ENCODE measurements at regions of chr20 and their contacts with region 1.

Region 1: DNA sequence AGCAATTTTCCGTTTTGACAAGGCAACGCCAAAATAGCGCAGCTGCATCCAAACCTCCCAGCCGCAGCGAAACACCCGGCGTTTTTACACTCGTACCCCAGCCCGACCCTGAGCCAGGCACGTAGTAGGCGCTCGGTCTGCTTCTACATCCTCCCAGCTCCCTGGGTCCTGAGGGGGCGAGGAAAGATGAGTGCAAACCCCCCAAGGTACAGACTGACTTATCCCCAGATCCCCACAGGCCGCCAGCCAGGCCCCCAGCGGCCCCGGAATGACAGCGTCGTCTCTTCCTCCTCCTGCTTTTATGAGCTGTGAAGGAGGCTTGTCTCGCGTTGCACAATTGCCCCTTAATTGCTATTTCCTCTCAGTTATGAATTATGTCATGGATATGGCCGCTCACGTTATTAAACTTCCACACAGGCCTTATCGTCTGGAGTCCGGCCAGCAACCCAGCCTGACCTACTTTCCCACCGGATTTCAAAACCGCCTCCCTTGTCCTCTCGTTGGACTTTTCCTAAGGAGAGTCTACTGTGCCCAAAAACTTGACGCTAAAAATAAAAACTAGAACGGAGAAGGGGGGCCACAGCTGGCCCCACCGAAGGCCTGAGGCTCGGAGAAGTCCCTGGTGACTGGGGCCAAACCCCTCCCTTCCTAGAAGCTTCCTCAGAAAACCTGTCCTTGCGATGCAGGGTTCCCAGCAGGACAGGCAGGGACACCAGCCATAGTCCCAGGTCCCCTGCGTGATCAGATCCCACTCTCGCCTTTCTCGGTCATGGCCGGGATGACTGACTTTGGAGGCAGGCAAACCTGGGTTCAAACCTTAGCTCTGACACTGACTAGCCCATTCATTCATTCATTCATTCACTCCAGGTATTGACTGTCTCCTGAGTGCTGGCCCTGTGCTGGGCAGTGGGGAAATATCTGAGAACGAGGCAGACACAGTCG is 130.9 kb upstream of the PTPN1 start:
- DNase-seq: peak; percentile 89

Region 2: DNA sequence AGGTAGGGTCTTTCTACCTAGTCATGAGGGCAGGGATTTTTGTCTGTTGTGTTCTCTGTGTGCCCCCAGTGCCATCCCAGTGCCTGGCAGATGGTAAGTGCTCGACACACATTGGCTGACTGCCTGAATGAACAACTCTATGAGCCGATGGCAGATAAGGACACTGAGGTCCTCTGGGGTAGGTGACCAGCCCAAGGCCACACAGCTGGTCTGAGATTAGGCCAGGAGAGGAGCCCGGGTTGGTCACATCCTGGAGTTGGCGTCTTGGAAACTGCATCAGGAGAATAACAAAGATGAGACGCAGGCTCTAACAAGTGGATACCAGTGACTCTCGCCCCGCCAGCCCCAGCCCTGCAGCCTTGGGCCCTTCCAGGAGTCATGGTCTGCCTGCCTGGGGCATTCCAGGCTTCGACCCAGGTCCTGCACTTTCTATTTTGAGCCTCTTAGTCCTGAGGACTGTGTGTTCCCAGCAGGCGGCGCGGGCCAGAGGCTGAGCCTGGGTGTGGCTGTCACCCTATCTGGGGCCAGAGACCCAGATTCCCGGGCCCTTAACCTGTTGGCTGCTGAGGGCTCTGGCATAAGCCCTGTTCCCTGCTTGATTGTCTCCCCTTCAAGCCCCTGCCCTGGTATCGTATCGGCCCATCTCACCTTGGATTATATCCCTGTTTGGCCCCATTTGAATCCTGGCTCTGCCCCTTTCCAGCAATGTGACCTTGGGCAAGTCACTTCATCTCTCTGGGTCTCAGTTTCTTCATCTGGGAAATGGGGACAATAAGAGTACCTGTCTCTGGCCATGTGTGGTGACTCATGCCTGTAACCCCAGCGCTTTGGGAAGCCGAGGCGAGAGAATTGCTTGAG is 100.4 kb before region 1 on chr20:
- intact Hi-C with region 1: loop called (anchors 2 kb)
- DNase-seq: no peak

Region 3: DNA sequence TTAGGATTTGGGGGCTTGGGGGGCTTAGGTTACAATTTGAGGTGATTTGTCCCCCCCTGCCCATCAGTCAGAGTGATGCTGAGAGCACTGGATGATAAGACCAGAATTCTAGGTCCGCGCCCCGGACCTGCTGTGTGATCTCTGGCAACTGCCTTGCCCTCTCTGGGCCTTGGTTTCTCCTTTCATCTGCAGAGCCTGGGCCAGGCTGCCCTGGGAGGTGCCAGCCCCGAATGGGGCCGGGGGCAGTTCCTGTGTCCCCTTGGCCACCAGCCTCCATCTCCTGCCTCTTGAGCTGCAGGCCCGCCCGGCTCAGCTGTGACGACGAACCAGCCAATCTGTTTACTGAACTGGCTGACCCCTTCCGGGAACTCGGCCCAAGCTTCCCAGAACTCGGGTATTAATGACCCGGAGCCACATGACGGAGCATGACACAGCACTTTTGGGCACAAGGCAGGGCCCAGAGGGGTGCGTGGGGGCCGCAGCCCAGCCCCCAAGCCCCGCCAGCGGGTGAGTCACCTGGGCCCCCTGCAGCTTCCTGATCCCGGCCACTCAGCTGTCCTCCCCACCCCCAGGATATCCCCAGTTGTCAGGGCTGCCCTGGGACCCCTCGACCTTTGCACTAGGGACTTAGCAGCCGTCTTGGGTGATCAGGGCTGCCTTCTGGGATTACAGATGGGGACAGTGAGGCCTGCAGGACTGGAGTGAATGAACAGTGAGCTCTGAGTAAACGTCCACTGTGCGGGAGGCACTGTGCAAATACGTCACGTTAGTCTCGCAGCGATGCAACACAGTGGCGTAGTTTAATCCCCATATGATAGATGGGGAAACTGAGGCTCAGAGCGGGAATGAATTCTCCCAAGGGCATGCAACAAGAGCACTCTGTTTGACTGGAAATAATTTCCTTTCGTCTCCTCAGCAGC is 86.7 kb before region 1 on chr20:
- intact Hi-C with region 1: loop called (anchors 2 kb)
- DNase-seq: peak; percentile 96

Region 4: DNA sequence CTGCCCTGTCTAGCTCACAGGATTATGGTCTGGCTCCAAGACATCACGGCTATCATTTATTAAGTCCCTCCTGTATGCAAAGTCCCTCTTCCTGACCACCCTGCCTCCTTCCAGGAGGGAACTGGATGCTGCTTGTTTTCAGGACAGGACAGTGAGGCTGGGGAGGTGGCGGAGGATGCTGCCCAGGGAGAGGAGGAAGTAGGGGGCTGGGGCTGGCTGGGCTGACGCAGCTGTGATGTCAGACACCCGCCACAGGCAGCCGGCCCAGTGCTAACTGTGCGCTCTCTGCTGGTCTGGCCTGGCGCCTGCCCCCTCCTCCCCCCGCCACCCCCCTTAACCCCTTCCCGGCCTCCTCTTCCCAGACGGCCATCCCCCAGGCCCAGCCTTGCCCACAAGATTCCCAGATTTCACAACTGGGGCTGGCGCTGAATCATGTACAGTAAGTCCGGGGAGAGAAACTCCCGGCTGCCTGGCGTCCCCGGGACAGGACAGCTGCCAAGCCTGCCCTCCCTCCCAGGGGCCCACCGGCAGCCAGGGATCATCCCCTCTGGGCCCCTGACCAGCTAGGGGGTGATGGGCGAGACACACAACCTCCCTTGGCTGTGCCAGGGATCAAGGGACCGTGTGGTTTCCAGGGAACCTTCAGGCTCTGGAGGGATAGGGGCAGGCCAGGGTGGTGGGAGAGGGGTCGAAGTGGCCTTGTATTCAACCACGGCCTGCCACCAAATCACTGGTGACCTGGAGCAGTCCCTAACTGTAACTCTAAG is 70.6 kb before region 1 on chr20:
- intact Hi-C with region 1: loop called (anchors 2 kb)
- DNase-seq: peak; percentile 97

Region 5: GRCh38 chr20:50346372-50347283 is 32.7 kb before region 1 on chr20:
- intact Hi-C with region 1: loop called (anchors 5 kb)
- DNase-seq: peak; percentile 94

Region 6: DNA sequence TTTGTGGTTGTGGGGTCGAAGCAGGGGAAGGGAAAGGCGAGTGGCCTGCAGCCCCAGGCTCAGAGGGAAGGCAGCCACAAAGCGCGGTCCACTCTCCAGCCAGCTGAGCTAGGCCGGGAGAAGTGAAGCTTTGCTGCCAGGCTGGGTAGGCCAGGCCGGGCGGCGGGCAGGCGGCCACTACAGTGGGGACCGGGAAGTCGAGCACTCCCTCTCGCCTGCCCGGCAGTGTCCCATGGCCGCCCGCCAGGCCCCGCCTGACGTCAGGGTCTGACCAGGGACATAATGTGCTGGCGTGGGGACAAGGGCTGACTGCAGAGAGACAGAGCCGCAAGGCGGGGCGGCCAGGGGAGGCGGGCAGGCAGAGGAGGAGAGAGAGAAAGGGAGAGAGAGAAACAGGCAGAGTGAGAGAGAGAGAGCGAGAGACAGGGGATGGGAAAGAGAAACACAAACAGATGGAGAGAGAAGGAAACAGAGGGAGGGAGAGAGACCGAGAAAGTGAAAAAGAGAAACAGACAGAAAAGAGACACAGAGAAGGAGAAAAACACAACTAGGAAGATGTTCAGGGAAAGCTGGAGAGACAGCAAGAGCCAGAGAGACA is 36.3 kb after region 1 on chr20:
- intact Hi-C with region 1: loop called (anchors 1 kb)
- DNase-seq: peak; percentile 97

Region 7: DNA sequence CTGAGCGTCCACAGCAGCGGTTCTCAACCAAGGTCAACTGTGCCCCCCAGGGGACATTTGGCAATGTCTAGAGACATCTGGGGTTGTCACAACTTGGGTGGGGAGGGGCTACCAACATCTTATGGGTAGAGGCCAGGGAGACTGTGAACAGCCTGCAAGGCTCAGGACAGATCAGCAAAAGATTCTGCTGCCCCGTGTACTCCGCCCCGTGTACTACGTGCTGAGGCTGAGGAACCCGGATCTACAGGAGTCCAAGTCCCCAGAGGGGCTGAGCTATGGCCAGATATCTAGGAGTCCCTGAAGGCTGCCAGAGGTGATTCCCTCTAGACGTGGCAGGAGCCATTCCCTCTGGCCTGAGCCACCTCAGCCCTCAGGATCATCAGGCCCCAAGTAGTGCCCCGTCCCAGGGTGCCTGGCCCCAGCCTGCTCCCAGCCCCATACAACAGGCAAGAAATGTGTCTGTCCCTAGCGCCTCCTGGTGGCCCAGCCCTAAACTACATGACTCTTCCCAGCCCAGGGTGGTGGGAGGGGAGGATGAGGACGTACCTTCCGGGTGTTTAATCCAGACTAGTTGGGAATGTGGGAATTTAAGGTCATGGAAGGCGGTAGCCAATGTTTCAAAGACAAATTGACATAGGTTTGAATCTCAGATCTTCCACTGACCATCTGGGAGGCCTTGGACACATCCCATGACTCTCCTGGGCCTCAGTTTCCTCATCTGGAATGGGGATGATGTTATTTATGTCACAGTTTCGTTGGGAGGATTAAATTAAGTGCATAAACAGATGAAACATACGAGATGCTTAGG is 81.3 kb after region 1 on chr20:
- intact Hi-C with region 1: loop called (anchors 5 kb)
- DNase-seq: peak; percentile 95